H1 (cell line): ENCODE measurements at regions of chr3 and their contacts with region 1.

Region 1: DNA sequence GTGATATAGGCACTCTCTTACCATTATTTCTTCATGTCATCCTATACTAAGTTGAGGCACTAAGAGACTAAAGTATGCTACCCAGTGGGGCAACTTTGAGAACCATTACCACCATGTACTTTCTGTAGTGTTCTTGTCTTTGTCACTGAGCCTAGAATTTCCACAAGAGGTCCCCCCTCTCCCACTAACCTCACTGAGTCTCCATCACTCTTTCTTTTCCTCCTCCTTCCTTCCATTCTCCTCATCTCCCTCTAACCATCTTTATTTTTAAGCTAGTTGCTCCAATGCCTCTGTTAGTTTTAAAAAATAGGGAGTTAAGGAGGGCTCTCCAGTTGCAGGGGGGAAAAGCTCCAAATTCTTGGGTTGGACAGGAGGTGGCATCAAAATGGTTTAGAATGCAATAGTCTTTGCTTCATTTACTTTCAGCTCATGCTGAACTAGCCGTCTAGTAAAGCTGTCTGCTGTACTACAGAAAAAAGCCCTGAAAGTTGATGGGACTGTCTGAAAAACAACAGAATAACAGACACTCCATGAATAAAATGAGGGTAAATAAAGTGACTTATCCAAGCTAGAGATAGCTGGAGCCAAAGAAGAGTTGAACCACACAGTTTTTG is 85.1 kb upstream of the MYRIP start:
- DNase-seq: no peak
- H3K4me3 ChIP-seq: no peak overlapping the region
- H3K27ac ChIP-seq: no peak overlapping the region
- H3K4me1 ChIP-seq: no peaks in the 10 kb centered on the region
- H3K27me3 ChIP-seq: no peaks in the 10 kb centered on the region
- CTCF ChIP-seq: peak in 2 of 3 experiments; percentile 39 to 43; a peak in 2 of 4 replicates
- EP300 ChIP-seq: no peak
- POLR2A ChIP-seq: no peak
- RAD21 ChIP-seq: peak; percentile 76 to 77

Region 2: DNA sequence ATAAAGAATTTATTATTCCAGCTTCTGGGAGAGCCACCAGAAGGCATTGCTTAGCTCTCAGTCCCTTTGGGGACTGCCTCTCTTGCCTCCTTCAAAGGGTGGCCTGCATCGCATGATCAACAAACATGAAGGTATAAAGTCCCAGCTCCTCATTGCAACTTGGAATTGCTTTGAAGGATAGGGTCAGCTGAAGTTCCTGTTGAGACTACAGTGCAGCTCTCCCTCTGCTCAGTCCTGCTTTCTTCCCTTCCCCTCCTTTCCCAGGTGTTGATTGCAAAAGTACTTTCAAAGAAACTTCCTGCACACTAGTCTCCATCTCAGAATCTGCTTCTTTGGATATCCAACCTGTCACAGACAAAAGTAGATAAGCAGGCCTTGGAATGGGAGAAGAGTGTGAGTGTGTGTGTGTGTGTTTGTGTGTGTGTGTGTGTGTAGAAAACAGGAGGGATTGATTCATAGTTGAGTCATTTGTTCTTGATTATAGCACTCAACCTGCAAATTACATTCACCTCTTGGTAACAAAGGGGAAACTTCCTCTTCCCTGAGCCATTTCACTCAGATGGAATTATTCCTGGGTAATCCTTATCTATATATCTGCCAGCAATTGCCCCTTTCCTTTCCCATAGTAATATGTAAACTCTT is 381.1 kb before region 1 on chr3:
- CTCF ChIA-PET with region 1: no interaction called
- POLR2A ChIA-PET with region 1: no interaction called
- DNase-seq: no peak
- H3K4me3 ChIP-seq: no peak overlapping the region
- H3K27ac ChIP-seq: no peak overlapping the region
- H3K4me1 ChIP-seq: peaks cover 0 to 4% (median 1%) of the 10 kb centered on the region in 4 experiments; a peak in 2 of 7 replicates
- H3K27me3 ChIP-seq: no peaks in the 10 kb centered on the region
- CTCF ChIP-seq: no peak
- EP300 ChIP-seq: no peak
- POLR2A ChIP-seq: no peak
- RAD21 ChIP-seq: no peak

Region 3: GRCh38 chr3:39541917-39542329 is 182.4 kb before region 1 on chr3:
- CTCF ChIA-PET with region 1: interaction called, 10 read pairs
- POLR2A ChIA-PET with region 1: no interaction called
- DNase-seq: no peak
- H3K4me3 ChIP-seq: no peak overlapping the region
- H3K27ac ChIP-seq: no peak overlapping the region
- H3K4me1 ChIP-seq: peaks cover 0 to 3% (median 1%) of the 10 kb centered on the region in 4 experiments; a peak in 3 of 7 replicates
- H3K27me3 ChIP-seq: no peaks in the 10 kb centered on the region
- CTCF ChIP-seq: peak in 2 of 3 experiments; percentile 40 to 48; a peak in 2 of 4 replicates
- EP300 ChIP-seq: no peak
- POLR2A ChIP-seq: no peak
- RAD21 ChIP-seq: peak; percentile 71 to 74

Region 4: DNA sequence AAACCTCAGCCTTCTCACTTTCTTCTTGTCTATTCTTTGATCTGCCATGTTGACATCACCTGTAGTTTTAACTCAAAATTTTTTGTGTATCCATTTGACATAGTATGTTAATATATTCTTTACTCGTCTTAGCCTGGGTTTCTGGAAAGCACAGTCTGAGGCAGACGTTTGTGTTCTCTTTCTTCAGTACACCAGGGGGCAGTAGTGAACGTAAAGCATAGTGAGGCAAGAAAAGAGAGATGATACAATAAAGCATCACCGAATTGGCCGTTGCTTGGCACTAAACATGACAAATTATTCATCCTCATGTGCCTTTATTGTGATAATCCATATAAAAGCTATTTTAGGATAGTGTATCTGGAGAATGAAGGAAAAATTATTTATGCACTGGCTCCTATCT is 55.9 kb before region 1 on chr3:
- CTCF ChIA-PET with region 1: interaction called, 21 read pairs
- POLR2A ChIA-PET with region 1: no interaction called
- DNase-seq: no peak
- H3K4me3 ChIP-seq: no peak overlapping the region
- H3K27ac ChIP-seq: no peak overlapping the region
- H3K4me1 ChIP-seq: no peaks in the 10 kb centered on the region
- H3K27me3 ChIP-seq: no peaks in the 10 kb centered on the region
- CTCF ChIP-seq: peak in 2 of 3 experiments; percentile 55 to 73; a peak in 3 of 4 replicates
- EP300 ChIP-seq: no peak
- POLR2A ChIP-seq: no peak
- RAD21 ChIP-seq: peak; percentile 59 to 64